Calu3 (cell line): ENCODE measurements at regions of chr2 and their contacts with region 1.

Region 1: DNA sequence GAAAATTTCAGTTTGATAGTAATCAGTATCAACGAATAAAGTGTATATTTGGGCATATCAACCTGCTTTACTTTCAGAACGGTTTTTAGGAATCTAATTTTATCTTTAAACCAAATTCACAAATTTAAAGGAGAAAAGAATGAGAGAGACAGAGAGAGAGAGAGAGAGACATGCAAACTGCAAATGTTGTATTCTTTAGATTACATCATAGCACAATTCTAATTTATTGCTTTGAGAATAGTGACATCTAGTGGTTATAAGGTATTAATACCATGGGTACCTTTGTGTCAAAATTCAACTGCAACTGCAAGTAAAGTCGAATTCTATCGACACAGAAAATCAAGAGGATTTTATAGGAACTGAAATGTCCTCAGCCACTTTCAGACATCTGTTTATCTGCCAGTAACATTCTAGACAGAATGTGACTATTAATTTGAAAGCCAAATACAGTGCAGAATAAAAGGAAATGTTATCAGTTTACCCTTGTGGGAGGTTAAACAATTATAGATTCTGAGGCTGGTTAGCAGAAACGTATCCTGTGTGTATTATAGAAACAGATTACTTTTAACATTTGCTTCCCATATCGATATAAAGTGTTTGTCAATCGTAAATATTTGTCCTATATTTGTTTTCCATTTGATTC is 529.8 kb upstream of the VRK2 start:
- DNase-seq: no peak
- H3K4me3 Mint-ChIP-seq: no peak overlapping the region
- H3K27ac Mint-ChIP-seq: no peak overlapping the region
- H3K4me1 Mint-ChIP-seq: peaks cover 8% of the 10 kb centered on the region
- H3K27me3 Mint-ChIP-seq: no peaks in the 10 kb centered on the region
- CTCF ChIP-seq: no peak

Region 2: DNA sequence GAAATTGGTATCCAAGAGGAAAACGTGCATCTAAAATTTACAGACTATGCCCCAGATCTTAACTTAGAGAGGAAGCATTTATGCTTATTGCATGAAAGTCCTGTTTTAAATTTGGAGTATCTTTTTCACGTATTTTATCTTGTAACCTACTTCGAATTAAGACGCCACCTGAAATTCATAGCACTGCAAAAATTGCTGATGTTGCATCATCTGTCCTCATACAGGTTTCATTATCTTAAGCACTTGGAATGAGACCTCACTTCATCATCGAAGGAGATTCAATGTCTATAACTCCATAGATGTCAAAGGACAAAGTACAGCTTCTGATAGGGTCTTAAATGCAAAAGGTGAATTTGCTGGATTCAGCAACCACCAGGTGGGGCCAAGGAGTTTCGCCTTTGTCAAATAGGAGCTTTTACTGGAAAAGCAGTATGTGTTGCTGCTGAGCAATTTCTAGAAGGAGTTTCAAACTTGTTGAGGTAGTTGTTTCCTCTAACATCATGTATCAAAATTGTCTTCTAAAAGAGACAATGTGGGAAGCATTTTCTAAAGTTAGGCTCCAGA is 1439.4 kb before region 1 on chr2:
- CTCF ChIA-PET with region 1: interaction called, 4 read pairs
- intact Hi-C with region 1: loop called (anchors 1 kb)
- DNase-seq: peak; percentile 53
- H3K4me3 Mint-ChIP-seq: no peak overlapping the region
- H3K27ac Mint-ChIP-seq: no peak overlapping the region
- H3K4me1 Mint-ChIP-seq: no peaks in the 10 kb centered on the region
- H3K27me3 Mint-ChIP-seq: peaks cover 18% of the 10 kb centered on the region
- CTCF ChIP-seq: peak; percentile 54

Region 3: GRCh38 chr2:56132138-56132537 is 1384.7 kb before region 1 on chr2:
- CTCF ChIA-PET with region 1: no interaction called
- intact Hi-C with region 1: loop called (anchors 2 kb)
- DNase-seq: no peak
- H3K4me3 Mint-ChIP-seq: no peak overlapping the region
- H3K27ac Mint-ChIP-seq: no peak overlapping the region
- H3K4me1 Mint-ChIP-seq: peaks cover 8% of the 10 kb centered on the region
- H3K27me3 Mint-ChIP-seq: no peaks in the 10 kb centered on the region
- CTCF ChIP-seq: no peak

Region 4: DNA sequence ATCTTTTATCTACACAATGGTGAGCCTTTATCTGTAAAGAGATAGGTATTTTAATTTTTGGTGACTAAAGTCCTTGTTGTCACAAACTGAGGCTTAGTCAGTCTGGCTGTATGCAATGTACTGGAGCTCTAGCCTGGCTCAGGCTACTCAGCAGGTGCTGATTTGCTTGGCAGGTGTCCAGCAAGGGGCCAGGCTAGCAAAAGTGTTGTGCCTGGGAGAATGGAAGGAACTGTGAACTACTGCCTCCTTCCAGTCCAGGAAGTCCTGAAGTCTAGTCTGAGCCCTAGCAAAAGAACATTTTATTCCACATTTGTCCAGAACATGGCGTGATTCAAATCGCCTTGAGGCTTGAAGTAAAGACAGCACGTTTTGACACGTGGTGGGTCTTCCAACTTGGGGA is 1072.5 kb before region 1 on chr2:
- CTCF ChIA-PET with region 1: no interaction called
- intact Hi-C with region 1: loop called (anchors 10 kb)
- DNase-seq: peak; percentile 83
- H3K4me3 Mint-ChIP-seq: no peak overlapping the region
- H3K27ac Mint-ChIP-seq: peak overlapping the region; percentile 92
- H3K4me1 Mint-ChIP-seq: peaks cover 42% of the 10 kb centered on the region
- H3K27me3 Mint-ChIP-seq: no peaks in the 10 kb centered on the region
- CTCF ChIP-seq: no peak

Region 5: DNA sequence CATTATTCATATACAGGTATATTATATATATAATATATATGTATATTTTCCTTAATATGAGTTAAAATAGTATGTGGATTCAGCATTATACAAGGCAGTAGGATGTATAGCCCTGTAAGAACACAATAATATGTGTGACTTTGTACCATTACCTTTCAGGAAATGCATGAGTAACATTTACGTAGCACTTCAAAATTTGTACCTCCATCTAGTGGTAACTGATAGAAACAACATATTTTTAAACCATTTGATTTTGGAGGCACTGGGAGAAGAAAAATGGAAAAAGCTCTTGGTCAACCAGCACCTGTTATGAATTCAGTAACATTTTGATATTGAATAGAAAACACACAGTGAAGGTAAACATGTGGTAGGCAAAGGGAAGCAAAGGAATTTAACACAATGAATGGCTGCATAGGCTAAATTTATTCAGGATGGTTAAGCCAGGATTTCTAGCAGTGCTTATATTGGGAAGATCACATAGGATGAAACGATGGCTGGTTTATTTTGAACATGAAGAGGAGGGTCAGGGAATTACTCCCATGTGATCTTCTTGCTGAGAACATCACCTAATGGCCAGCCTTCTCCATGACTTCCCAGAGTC is 767.6 kb before region 1 on chr2:
- CTCF ChIA-PET with region 1: no interaction called
- intact Hi-C with region 1: loop called (anchors 5 kb)
- DNase-seq: no peak
- H3K4me3 Mint-ChIP-seq: no peak overlapping the region
- H3K27ac Mint-ChIP-seq: no peak overlapping the region
- H3K4me1 Mint-ChIP-seq: peaks cover 11% of the 10 kb centered on the region
- H3K27me3 Mint-ChIP-seq: no peaks in the 10 kb centered on the region
- CTCF ChIP-seq: no peak

Region 6: GRCh38 chr2:56860991-56861390 is 655.8 kb before region 1 on chr2:
- CTCF ChIA-PET with region 1: no interaction called
- intact Hi-C with region 1: loop called (anchors 10 kb)
- DNase-seq: no peak
- H3K4me3 Mint-ChIP-seq: no peak overlapping the region
- H3K27ac Mint-ChIP-seq: no peak overlapping the region
- H3K4me1 Mint-ChIP-seq: no peaks in the 10 kb centered on the region
- H3K27me3 Mint-ChIP-seq: no peaks in the 10 kb centered on the region
- CTCF ChIP-seq: no peak